Esophagus muscularis mucosa (tissue), 4 donors: ENCODE measurements at regions of chr16 and their contacts with region 1.

Region 1: DNA sequence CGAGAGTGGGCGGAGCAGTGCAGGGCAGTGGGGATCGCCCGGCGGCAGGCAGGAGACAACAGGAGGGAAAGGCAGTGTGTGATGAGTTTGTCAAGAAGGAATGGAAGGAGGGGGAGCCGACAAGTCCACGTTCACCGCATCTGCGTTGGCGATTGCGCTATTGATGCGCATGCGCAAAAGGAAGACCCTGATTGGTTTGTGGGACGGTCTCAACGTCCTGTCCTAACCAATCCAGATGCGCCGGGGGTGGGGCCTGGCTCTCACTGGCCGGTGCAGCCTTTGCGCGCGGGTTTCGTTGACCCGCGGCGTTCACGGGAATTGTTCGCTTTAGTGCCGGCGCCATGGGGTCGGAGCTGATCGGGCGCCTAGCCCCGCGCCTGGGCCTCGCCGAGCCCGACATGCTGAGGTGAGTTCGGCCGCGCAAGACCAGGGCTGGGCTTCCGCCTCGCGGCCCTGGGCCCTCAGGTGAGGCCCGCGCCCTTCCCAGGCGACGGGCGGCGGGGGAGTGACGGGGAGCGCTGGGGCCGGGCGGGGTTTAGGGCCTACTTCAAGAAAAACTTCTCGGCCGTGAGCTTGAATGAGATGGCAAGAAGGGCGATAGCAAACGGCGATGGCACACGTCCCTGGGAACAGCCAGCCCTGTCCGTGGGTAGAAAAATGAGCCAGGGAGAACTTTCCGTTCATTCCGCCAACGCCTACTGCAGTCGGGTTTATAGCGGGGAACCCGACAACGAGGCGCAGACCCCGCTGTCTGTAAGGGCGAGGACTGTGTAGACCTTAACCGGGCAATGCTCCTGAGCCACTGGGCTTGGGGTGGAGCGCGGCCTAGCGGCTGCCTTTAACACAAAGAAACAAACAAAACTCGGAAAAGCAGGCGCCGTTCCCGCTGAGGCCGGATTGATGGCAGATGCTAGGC is at the start of gene ORC6:
- DNase-seq: peak; percentile 100
- H3K4me3 ChIP-seq: peak within 1 kb of the TSS; percentile 75 to 89 (median 80)
- H3K27ac ChIP-seq: peak within 1 kb of the TSS; percentile 87 to 93 (median 90)
- H3K4me1 ChIP-seq: peaks cover 33 to 44% (median 38%) of the 10 kb centered on the region in 4 donors
- H3K27me3 ChIP-seq: no peaks in the 10 kb centered on the region
- CTCF ChIP-seq: peak in 1 of 3 experiments; percentile 9
- EP300 ChIP-seq: no peak
- POLR2A ChIP-seq: no peak
- total RNA-seq, gene ORC6: 0.32 to 0.99 (median 0.67) TPM

Region 2: DNA sequence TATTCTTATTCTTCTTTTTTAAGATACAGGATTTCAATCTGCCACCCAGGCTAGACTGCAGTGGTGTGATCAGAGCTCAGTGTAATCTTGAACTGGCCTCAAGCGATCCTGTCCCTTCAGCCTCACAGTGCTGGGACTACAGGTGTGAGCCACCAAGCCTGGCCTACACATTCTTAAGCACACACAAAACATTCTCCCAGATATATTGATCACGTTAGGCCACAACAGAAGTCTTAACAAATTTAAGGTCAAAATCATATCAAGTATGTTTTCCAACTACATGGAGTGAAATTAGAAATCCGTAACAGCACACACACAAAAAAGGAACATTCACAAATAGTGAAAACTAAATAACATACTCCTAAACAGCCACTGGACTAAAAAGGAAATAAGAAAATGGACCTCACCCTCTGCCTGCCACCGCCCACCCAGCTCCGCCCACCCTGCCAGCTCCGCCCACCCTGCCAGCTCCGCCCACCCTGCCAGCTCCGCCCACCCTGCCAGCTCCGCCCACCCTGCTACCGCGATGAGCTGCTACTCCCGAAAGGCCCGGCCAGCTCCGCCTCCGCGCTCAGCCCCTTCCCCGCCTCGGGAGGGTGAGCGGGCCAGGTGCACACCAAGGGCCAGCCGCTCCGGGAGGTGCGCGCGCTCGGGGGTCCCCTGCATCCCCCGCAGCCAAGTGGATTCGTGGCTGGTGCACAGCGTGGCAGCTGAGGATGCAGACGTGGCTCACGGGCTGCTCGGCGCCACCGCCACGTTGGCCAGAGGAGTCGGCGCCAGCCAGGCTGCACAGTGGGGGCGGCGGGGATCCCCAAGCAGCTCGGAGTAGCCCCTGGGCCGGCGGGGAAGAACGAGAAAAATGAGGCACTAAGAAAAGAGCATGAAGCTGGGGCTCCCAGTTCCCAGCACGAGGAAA is 100.1 kb after region 1 on chr16:
- intact Hi-C with region 1: loop called (anchors 10 kb)
- DNase-seq: no peak
- H3K4me3 ChIP-seq: peak overlapping the region; percentile 63 to 72 (median 69)
- H3K27ac ChIP-seq: peak overlapping the region; percentile 36 to 65 (median 48)
- H3K4me1 ChIP-seq: peaks cover 0 to 13% (median 6%) of the 10 kb centered on the region in 4 donors
- H3K27me3 ChIP-seq: no peaks in the 10 kb centered on the region
- CTCF ChIP-seq: no peak
- EP300 ChIP-seq: no peak
- POLR2A ChIP-seq: no peak

Region 3: GRCh38 chr16:46826631-46827030 is 137.0 kb after region 1 on chr16:
- intact Hi-C with region 1: loop called (anchors 5 kb)
- DNase-seq: no peak
- H3K4me3 ChIP-seq: no peak overlapping the region
- H3K27ac ChIP-seq: no peak overlapping the region
- H3K4me1 ChIP-seq: peaks cover 7 to 45% (median 26%) of the 10 kb centered on the region in 4 donors
- H3K27me3 ChIP-seq: no peaks in the 10 kb centered on the region
- CTCF ChIP-seq: no peak
- EP300 ChIP-seq: no peak
- POLR2A ChIP-seq: no peak